A549 (cell line): ENCODE measurements at regions of chr14 and their contacts with region 1.

Region 1: DNA sequence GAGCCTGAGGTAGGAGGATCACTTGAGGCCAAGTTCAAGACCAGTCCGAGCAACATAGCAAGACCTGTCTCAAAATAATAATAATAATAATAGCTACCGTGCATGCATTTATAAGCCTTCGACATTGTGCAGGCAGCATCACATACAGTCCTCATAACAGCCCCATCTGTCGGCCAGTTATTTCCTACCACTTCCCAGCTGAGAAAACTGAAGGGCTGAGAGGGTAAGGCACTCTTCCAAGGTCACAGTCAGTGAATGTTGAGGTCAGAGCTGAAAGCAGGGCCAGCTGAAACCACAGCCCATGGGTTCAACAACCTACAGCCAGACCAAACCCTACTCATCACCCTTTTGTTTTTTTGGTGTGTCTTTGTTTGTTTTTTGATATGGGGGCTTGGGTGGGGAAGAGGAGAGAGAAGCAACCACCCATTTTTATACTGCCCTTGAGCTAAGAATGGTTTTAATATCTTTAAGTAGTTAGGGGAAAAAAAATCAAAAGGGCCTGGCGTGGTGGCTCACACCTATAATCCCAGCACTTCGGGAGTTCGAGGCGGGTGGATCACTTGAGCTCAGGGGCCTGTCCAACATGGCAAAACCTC is 16.8 kb upstream of the ITPK1 start:
- DNase-seq: peak; percentile 57 to 59
- ATAC-seq: peak; percentile 83 to 91; a peak in 5 of 6 replicates
- H3K4me3 ChIP-seq: no peak overlapping the region
- H3K27ac ChIP-seq: no peak overlapping the region
- H3K4me1 ChIP-seq: peaks cover 22% of the 10 kb centered on the region
- CTCF ChIP-seq: peak; percentile 38
- EP300 ChIP-seq: no peak
- POLR2A ChIP-seq: no peak
- RAD21 ChIP-seq: peak; percentile 25 to 42; a peak in 2 of 5 replicates

Region 2: DNA sequence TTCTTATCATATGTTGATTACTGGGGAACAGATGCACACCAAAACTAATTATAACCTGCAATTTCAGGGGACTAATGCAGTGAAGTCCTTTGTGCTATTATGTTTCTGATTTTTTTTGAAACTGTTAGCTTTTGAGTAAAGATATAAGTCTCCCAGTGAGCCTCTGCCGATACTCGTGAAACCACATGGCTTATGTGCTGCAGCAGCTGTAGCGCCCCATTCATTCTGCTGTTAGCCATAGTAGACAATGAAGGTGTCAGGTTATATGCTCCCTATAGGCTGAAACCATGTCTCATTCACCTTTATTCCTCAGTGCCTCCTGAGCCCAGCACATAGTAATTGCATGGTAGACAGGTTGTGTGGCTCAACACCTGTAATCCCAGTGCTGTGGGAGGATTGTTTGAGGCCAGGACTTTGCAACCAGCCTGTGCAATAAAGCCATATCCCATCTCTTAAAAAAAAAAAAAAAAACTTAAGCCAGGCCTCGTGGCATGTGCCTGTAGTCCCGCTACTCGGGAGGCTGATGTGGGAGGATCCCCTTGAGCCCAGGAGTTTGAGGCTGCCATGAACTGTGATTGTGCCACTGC is 313.5 kb before region 1 on chr14:
- CTCF ChIA-PET with region 1: no interaction called
- POLR2A ChIA-PET with region 1: no interaction called
- DNase-seq: no peak
- ATAC-seq: no peak
- H3K4me3 ChIP-seq: no peak overlapping the region
- H3K27ac ChIP-seq: no peak overlapping the region
- H3K4me1 ChIP-seq: no peaks in the 10 kb centered on the region
- CTCF ChIP-seq: no peak
- EP300 ChIP-seq: no peak
- POLR2A ChIP-seq: no peak
- RAD21 ChIP-seq: no peak

Region 3: GRCh38 chr14:92945959-92946846 is 186.4 kb before region 1 on chr14:
- CTCF ChIA-PET with region 1: interaction called, 57 read pairs
- POLR2A ChIA-PET with region 1: no interaction called
- DNase-seq: peak; percentile 39 to 91
- ATAC-seq: peak; percentile 62 to 87
- H3K4me3 ChIP-seq: no peak overlapping the region
- H3K27ac ChIP-seq: peak overlapping the region; percentile 59 to 88
- H3K4me1 ChIP-seq: peaks cover 20% of the 10 kb centered on the region
- CTCF ChIP-seq: no peak
- EP300 ChIP-seq: no peak
- POLR2A ChIP-seq: no peak
- RAD21 ChIP-seq: no peak

Region 4: DNA sequence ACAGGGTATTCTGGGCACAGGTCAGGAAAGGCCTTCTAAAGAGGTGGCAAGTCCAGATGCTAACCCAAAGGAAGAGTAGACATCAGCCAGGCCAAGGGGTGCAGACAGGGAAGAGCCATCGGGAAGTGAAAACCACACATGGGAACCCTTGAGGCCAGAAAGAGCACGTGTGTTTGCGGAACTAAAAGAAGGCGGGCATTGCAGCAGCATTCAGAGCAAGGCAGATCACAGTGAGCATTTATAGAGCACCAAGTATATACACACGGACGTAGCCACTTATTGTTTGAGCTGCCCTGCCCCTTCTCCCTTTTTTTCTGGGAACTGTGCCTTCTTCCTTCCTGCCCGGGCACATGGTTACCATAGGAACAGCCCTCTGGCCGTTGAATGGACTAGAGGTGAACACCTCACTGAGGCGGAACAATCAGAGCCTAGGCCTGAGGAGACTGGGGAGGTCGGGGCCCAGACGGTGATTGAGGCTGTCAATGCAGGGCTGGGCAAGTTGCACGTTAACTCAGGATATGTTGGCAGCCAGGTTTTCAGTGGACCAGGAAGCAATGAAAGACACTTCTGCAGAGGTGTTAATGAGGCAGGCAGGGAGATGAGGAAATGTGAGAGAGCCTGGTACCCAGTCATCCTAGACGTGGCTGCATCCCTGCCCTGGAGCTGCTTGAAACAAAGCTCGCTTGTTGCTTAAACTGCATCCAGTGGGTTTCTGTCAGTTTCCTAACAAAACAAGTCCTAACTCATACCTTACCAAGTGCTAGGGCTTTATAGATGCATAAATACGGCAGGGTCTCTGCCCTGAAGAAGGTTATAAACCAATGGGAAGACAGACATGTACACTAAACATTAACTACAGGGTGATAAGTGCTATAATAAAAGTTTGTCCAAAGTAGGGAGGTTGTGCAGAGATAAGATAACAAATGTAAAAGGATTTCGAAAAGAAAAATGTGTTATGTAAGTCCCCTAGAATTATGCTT is 17.9 kb after region 1 on chr14:
- CTCF ChIA-PET with region 1: interaction called, 10 read pairs
- POLR2A ChIA-PET with region 1: no interaction called
- DNase-seq: no peak
- ATAC-seq: peak; percentile 32 to 68; a peak in 4 of 6 replicates
- H3K4me3 ChIP-seq: no peak overlapping the region
- H3K27ac ChIP-seq: no peak overlapping the region
- H3K4me1 ChIP-seq: peaks cover 8% of the 10 kb centered on the region; the same call in 1 of the 3 replicates
- CTCF ChIP-seq: no peak
- EP300 ChIP-seq: no peak
- POLR2A ChIP-seq: no peak
- RAD21 ChIP-seq: no peak